CD4-positive, alpha-beta memory T cell (primary cell): ENCODE measurements at regions of chr3 and their contacts with region 1.

Region 1: DNA sequence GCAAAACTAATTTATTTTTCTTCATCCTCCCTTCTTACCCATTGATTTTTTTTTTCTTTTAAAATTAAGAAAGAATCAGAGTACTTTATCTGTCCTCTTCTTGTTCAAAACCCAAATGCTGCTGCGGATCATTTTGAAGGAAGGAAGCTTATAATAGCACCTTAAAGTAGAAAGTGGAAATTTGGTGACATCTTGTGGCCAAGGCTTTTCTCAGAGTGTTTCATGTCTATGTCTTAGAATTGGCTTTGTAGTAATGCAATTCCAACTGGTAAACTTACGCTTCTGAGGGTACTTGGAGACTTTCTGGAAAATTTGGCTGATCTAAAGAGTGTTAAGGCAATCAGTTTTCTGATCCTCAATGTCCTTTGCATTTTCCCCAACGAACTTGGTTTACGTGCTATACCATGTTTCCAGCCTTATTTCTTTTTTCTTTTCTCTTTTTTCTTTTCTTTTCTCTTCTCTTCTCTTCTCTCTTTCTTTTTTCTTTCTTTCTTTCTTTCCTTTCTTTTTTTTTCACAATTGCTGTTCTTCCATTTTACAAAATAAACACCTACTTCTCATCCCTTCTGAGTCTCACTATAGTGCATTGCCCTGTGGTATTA is 30.7 kb downstream of the C3orf38 start:
- DNase-seq: peak in 4 of 5 donors; percentile 23 to 39 (median 28)
- H3K4me3 ChIP-seq: no peak overlapping the region
- H3K4me3 Mint-ChIP-seq: no peak overlapping the region
- H3K27ac ChIP-seq: no peak overlapping the region
- H3K27ac Mint-ChIP-seq: no peak overlapping the region
- H3K4me1 ChIP-seq: no peaks in the 10 kb centered on the region
- H3K4me1 Mint-ChIP-seq: peaks cover 0 to 5% (median 1%) of the 10 kb centered on the region in 4 donors
- H3K27me3 ChIP-seq: no peaks in the 10 kb centered on the region
- H3K27me3 Mint-ChIP-seq: peaks cover 0 to 4% of the 10 kb centered on the region in 2 donors

Region 2: GRCh38 chr3:87298111-87298718 is 882.3 kb before region 1 on chr3:
- CTCF ChIA-PET with region 1: interaction called, 4 read pairs
- POLR2A ChIA-PET with region 1: no interaction called
- intact Hi-C with region 1: loop called (anchors 1 kb)
- DNase-seq: peak in 4 of 5 donors; percentile 25 to 36 (median 31)
- H3K4me3 ChIP-seq: no peak overlapping the region
- H3K4me3 Mint-ChIP-seq: no peak overlapping the region
- H3K27ac ChIP-seq: no peak overlapping the region
- H3K27ac Mint-ChIP-seq: no peak overlapping the region
- H3K4me1 ChIP-seq: no peaks in the 10 kb centered on the region
- H3K4me1 Mint-ChIP-seq: peaks cover 0 to 2% (median 0%) of the 10 kb centered on the region in 4 donors
- H3K27me3 ChIP-seq: no peaks in the 10 kb centered on the region
- H3K27me3 Mint-ChIP-seq: peaks cover 0 to 3% of the 10 kb centered on the region in 2 donors

Region 3: DNA sequence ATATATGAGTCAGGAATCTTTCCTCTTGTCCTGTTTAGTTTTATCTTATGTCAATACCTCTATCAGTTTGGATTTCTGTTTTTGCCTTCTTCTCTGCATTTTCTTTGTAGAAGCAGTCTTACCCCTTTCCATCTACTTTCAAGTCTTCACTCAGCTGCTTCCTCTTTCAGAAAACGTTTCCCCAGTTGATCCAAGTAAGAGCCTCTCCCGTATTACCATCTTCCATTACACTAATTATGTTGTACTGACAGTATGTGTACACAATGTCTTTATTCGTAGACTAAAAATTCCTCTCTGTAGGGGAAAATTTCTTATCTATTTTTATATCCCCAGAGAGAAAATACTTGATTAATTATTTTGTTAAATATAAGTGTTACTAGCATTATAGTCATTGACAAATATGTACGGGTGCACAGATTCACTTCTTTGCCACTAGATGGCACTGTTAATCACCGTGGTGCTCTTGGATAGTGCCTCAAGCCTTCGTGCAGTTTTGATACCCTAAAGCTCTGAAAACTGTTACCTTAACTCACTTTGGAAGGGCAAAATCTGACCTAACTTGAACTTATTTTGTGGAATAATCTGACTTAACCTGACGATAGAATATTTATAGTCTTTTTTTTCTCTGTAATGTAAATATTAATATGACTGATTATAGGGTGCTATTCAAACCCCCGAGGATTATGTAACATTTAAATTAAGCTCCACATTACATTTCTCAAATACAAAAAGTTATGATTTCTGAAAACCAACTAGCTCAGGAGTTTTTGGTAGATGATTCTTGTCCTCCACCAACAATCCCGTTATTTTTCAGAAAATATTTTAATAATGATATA is 829.9 kb before region 1 on chr3:
- CTCF ChIA-PET with region 1: interaction called, 23 read pairs
- POLR2A ChIA-PET with region 1: no interaction called
- intact Hi-C with region 1: loop called (anchors 1 kb)
- DNase-seq: peak in 4 of 5 donors; percentile 46 to 54 (median 52)
- H3K4me3 ChIP-seq: no peak overlapping the region
- H3K4me3 Mint-ChIP-seq: no peak overlapping the region
- H3K27ac ChIP-seq: no peak overlapping the region
- H3K27ac Mint-ChIP-seq: no peak overlapping the region
- H3K4me1 ChIP-seq: no peaks in the 10 kb centered on the region
- H3K4me1 Mint-ChIP-seq: no peaks in the 10 kb centered on the region
- H3K27me3 ChIP-seq: no peaks in the 10 kb centered on the region
- H3K27me3 Mint-ChIP-seq: peaks cover 2 to 3% of the 10 kb centered on the region in 2 donors

Region 4: DNA sequence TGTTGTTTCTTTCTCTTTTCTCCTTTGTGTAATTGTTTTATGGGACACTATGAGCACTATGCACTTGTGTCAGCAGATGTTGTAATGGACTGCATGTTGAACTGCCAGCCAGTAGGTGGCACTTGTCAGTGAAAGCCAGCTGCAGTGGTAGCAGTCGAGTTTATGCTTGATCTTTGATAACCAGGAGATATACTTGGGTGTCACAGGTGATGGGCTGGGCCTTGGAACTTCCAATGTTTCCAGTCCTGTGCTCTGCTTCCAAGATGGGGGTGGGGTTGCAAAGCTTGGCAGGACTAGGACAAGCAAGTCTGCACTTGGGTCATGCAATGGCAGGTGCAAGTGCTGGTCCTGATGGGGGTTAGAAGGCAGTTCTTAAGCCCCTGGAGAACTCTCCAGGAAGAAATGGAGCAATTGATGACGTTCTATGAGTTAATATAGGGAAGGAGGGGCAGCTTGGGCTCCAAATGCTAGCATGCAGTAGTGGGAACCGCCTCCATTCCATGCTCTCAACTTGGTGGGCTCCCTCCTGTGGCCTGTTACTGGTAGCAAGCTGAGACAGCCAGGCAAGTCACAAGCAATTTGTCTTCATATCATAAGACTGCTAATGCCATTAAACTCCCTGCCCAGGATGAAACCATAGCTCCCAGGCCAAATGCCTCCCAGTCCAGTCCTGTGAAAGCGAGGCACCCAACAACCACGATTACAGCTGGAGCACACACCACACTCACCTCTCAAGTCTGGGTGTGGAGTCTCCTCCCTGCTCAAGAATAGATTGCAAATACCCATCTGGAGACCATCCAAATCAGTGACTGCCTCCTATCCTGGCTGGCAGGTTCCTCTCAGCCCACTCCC is 408.9 kb before region 1 on chr3:
- CTCF ChIA-PET with region 1: interaction called, 3 read pairs
- POLR2A ChIA-PET with region 1: no interaction called
- intact Hi-C with region 1: loop called (anchors 1 kb)
- DNase-seq: peak; percentile 27 to 39 (median 32)
- H3K4me3 ChIP-seq: no peak overlapping the region
- H3K4me3 Mint-ChIP-seq: no peak overlapping the region
- H3K27ac ChIP-seq: no peak overlapping the region
- H3K27ac Mint-ChIP-seq: no peak overlapping the region
- H3K4me1 ChIP-seq: no peaks in the 10 kb centered on the region
- H3K4me1 Mint-ChIP-seq: peaks cover 0 to 2% (median 0%) of the 10 kb centered on the region in 4 donors
- H3K27me3 ChIP-seq: no peaks in the 10 kb centered on the region
- H3K27me3 Mint-ChIP-seq: peaks cover 4 to 16% of the 10 kb centered on the region in 2 donors